ENCODE measurements at regions of chr2 and their contacts with region 1.

Region 1: DNA sequence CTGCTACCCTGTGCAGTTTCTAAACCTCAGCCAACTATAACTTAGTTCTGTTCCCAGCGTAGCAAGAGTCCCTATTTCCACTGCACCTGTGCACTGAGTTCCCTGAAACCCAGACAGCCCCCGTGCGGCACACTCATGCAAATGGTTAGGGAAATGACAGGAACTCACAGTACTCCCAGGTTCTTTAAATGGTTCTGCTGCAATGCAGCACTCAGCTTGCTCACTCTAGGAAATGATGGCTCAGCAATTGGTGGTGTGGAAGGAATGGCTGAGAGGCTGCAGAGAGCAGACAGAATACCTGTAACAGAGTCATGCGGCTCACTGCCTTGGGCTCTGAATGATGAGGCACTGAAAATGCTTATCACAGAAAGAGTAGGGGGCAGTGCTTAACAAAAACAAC is 143.0 kb downstream of the RAD51AP2 start:
- DNase-seq: no peak
- H3K4me3 ChIP-seq: no peak overlapping the region
- H3K27ac ChIP-seq: no peak overlapping the region
- H3K4me1 ChIP-seq: no peaks in the 10 kb centered on the region
- H3K27me3 ChIP-seq: no peaks in the 10 kb centered on the region
- CTCF ChIP-seq: no peak

Region 2: DNA sequence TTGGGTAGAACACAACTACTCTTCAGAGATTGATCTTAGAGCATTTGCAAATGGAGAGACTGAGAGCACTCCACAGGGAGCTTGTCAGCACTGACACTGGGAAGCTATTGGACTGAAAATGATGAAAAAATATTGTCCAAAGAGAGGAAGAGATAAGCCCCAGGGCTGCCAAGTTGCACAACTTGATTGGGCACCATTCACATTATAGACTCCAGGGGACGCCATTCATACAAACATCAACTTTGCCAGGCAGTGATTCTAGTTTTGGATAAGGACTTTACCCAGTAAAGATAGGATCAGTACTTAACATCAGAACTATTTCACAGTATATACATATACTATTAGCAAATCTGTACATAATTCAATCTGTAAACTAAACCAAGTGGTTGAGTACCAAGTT is 1514.5 kb before region 1 on chr2:
- CTCF ChIA-PET with region 1: no interaction called
- POLR2A ChIA-PET with region 1: no interaction called
- intact Hi-C with region 1: no loop called
- DNase-seq: no peak
- H3K4me3 ChIP-seq: no peak overlapping the region
- H3K27ac ChIP-seq: no peak overlapping the region
- H3K4me1 ChIP-seq: no peaks in the 10 kb centered on the region
- H3K27me3 ChIP-seq: peaks cover 17% of the 10 kb centered on the region; the same call in 1 of the 2 replicates
- CTCF ChIP-seq: no peak

Region 3: DNA sequence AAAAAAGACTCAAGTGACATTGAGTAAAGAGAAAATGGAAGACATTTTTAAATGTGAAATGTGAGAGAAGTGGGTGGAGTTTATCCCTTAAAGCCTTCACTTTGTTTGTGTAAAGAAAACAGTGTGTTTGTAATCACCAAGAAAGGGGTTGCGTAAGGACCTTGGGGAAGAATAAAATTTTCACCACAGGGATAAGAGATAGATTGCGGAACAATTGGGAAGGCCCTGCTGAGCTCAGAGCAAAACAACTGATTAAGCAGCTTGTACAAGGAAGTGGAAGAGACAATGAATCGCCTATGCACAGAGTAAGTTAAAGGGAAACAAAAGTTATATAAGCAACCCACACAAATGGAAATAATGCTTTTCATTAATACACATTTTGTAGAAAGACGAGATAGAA is 184.7 kb before region 1 on chr2:
- CTCF ChIA-PET with region 1: no interaction called
- POLR2A ChIA-PET with region 1: no interaction called
- intact Hi-C with region 1: no loop called
- DNase-seq: peak in 1 of 2 experiments; percentile 52
- H3K4me3 ChIP-seq: no peak overlapping the region
- H3K27ac ChIP-seq: no peak overlapping the region
- H3K4me1 ChIP-seq: no peaks in the 10 kb centered on the region
- H3K27me3 ChIP-seq: no peaks in the 10 kb centered on the region
- CTCF ChIP-seq: no peak

Region 4: DNA sequence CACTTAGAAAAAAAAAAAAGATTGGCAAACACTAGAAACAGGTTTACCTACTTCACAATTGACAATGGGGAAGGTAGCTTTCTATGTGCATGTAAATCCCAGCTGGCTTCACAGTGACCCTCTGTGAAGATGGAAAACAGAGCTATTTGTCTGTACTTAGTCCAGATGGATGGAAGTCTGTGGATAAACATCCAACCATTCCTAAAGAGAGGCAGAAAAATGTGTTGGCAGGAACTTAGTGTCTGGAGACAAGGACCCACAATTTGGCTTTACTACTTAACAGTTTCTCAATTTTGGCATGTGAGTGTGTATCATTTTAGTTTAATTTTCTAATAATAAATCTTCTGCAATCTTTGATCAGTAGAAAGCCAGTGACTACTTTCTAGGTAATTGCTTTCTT is 11.4 kb before region 1 on chr2:
- CTCF ChIA-PET with region 1: no interaction called
- POLR2A ChIA-PET with region 1: no interaction called
- intact Hi-C with region 1: no loop called
- DNase-seq: no peak
- H3K4me3 ChIP-seq: no peak overlapping the region
- H3K27ac ChIP-seq: no peak overlapping the region
- H3K4me1 ChIP-seq: no peaks in the 10 kb centered on the region
- H3K27me3 ChIP-seq: no peaks in the 10 kb centered on the region
- CTCF ChIP-seq: no peak

Region 5: GRCh38 chr2:17388798-17389197 is 13.5 kb after region 1 on chr2:
- CTCF ChIA-PET with region 1: no interaction called
- POLR2A ChIA-PET with region 1: interaction called, 10 read pairs
- intact Hi-C with region 1: no loop called
- DNase-seq: no peak
- H3K4me3 ChIP-seq: no peak overlapping the region
- H3K27ac ChIP-seq: no peak overlapping the region
- H3K4me1 ChIP-seq: no peaks in the 10 kb centered on the region
- H3K27me3 ChIP-seq: no peaks in the 10 kb centered on the region
- CTCF ChIP-seq: no peak